Panc1 (cell line): ENCODE measurements at regions of chr4 and their contacts with region 1.

Region 1: GRCh38 chr4:173025131-173025530 is 143.5 kb upstream of the GALNT7 start:
- DNase-seq: no peak
- ATAC-seq: peak; percentile 83
- H3K4me3 ChIP-seq: no peak overlapping the region
- H3K27ac ChIP-seq: peak overlapping the region; percentile 68; the same call in 1 of the 2 replicates
- H3K4me1 ChIP-seq: no peaks in the 10 kb centered on the region
- H3K27me3 ChIP-seq: no peaks in the 10 kb centered on the region
- CTCF ChIP-seq: peak; percentile 73

Region 2: DNA sequence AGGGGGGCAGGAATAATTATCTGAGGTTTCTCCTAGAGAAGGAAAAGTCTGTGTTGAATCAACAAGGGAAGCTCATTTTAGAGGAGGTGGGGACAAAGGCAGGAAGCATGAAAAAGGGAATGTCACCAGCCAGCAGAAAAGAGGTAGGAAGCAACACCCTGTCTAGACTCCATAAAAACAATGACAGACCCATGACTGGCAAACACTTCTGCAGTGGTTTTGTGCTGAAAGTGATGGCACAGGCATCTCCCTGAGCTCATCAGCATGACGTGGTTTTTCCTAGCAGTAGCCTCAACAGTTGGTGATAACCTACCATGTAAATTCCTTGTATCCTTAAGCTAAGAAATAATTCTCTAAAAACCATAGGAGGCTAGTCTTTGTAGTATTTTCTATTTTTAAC is 32.8 kb after region 1 on chr4:
- CTCF ChIA-PET with region 1: no interaction called
- POLR2A ChIA-PET with region 1: interaction called, 13 read pairs
- in situ Hi-C with region 1: no loop called
- intact Hi-C with region 1: no loop called
- DNase-seq: no peak
- ATAC-seq: no peak
- H3K4me3 ChIP-seq: no peak overlapping the region
- H3K27ac ChIP-seq: peak overlapping the region; percentile 39; the same call in 1 of the 2 replicates
- H3K4me1 ChIP-seq: peaks cover 9% of the 10 kb centered on the region
- H3K27me3 ChIP-seq: no peaks in the 10 kb centered on the region
- CTCF ChIP-seq: no peak

Region 3: GRCh38 chr4:173257732-173258717 is 232.9 kb after region 1 on chr4:
- CTCF ChIA-PET with region 1: interaction called, 4 read pairs
- POLR2A ChIA-PET with region 1: no interaction called
- in situ Hi-C with region 1: no loop called
- intact Hi-C with region 1: loop called (anchors 5 kb)
- DNase-seq: peak; percentile 60
- ATAC-seq: peak; percentile 93
- H3K4me3 ChIP-seq: no peak overlapping the region
- H3K27ac ChIP-seq: peak overlapping the region; percentile 98
- H3K4me1 ChIP-seq: peaks cover 47% of the 10 kb centered on the region
- H3K27me3 ChIP-seq: no peaks in the 10 kb centered on the region
- CTCF ChIP-seq: peak; percentile 80